ENCODE measurements at regions of chr5 and their contacts with region 1.

Region 1: DNA sequence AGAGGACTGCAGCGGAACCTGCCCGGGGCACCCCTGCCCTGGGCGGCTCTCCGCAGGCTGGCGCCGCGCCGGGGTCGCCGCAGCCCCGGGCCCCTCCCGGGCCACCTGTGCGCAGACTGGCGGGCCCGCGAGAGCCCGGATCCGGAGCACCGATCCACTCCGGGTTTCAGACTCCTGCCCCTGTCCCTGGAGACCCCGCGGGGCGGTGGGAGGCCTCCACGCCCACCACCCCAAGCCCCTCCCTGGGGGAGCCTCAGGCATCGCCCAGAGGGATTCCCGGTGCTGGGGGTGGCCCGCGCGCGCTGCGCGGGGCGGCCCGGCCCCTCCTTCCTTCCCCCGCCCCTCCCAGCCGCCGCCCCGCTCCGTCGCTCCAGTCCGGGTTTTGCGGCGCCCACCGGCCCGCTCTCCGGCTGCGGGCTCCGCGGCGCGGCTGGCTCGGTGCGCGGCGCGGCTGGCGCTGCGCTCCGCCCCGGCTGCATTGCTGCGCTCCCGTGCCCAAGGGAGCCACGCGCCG is at the start of gene UNC5A:
- DNase-seq: peak; percentile 80
- ATAC-seq: peak; percentile 61
- H3K4me3 Mint-ChIP-seq: peak within 1 kb of the TSS; percentile 43
- H3K27ac Mint-ChIP-seq: no peak within 1 kb of the TSS
- H3K4me1 Mint-ChIP-seq: peaks cover 8% of the 10 kb centered on the region
- H3K27me3 Mint-ChIP-seq: peaks cover 57% of the 10 kb centered on the region
- total RNA-seq, gene UNC5A: not detected

Region 2: DNA sequence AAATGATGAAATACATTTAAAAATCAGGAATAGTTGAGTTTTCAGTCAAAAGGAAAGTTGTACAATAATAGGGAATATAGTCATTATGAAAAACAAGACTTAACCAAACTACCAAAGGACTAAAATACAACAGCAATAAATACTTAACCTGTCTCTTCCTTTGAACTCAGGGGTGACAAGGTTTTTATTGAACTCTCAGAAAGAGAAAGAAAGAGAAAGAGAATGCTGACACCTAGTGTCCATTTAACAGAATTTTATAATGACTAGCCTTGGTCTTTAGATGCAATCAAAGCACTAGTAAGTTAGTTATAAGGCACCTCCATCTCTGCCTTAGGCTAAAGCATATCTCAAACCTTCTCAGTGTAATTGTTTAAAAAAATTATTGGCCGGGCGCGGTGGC is 148.9 kb after region 1 on chr5:
- CTCF ChIA-PET with region 1: no interaction called
- POLR2A ChIA-PET with region 1: no interaction called
- intact Hi-C with region 1: loop called in 1 of 2 experiments (anchors 2 kb)
- DNase-seq: no peak
- ATAC-seq: peak; percentile 66
- H3K4me3 Mint-ChIP-seq: no peak overlapping the region
- H3K27ac Mint-ChIP-seq: peak overlapping the region; percentile 37
- H3K4me1 Mint-ChIP-seq: peaks cover 2% of the 10 kb centered on the region
- H3K27me3 Mint-ChIP-seq: no peaks in the 10 kb centered on the region